PC-9 (cell line): ENCODE measurements at regions of chr13 and their contacts with region 1.

Region 1: DNA sequence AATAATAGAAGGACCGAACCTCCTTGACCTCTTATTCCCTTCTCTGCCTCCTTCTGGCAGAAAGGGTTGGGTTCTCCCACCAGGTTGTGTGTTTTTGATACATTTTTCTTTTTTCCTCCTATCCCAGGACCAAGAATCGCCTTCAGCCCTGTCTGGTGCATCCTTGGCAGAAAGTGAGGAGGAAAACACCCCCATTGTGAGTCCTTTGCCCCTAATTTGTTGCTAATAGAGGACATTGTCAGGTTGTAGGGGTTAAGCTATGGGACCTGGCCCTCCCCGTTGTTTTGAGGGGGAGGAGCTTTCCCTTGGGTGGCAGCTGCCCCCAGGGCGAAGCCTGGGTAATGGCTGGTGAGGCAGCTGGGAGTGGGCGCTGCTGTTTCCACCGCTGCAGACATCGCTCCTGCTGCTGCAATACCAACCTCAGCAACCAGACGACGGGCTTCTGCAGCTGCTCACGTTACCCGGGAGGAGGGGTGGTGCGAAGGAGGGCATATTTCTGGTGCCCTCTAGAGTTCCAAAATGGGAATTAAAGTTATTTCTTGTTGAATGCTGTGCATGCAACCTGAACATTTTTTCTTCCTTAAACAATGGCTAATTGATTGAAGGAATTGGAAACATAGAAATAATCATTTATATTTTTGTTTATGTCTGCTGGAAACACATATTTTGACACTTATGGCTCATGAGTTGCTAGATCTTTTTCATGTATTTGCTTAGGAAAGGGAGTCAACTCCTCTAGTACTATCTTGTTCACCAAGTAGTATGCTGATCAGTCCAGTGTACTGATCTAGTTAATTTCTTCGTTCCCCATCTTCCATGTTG is 1.5 kb downstream of the ZMYM2 start:
- DNase-seq: peak; percentile 72 to 84
- H3K4me3 ChIP-seq: peak overlapping the region; percentile 76
- H3K27ac ChIP-seq: peak overlapping the region; percentile 37
- H3K4me1 ChIP-seq: peaks cover 16% of the 10 kb centered on the region
- H3K27me3 ChIP-seq: no peaks in the 10 kb centered on the region
- CTCF ChIP-seq: peak; percentile 77

Region 2: GRCh38 chr13:19601749-19602725 is 358.0 kb before region 1 on chr13:
- CTCF ChIA-PET with region 1: no interaction called
- POLR2A ChIA-PET with region 1: no interaction called
- intact Hi-C with region 1: loop called (anchors 10 kb)
- DNase-seq: peak in 1 of 2 experiments; percentile 46
- H3K4me3 ChIP-seq: peak overlapping the region; percentile 87
- H3K27ac ChIP-seq: no peak overlapping the region
- H3K4me1 ChIP-seq: peaks cover 26% of the 10 kb centered on the region
- H3K27me3 ChIP-seq: no peaks in the 10 kb centered on the region
- CTCF ChIP-seq: 0 out of 2 replicates have a peak, but pooled peaks have one; percentile 33

Region 3: DNA sequence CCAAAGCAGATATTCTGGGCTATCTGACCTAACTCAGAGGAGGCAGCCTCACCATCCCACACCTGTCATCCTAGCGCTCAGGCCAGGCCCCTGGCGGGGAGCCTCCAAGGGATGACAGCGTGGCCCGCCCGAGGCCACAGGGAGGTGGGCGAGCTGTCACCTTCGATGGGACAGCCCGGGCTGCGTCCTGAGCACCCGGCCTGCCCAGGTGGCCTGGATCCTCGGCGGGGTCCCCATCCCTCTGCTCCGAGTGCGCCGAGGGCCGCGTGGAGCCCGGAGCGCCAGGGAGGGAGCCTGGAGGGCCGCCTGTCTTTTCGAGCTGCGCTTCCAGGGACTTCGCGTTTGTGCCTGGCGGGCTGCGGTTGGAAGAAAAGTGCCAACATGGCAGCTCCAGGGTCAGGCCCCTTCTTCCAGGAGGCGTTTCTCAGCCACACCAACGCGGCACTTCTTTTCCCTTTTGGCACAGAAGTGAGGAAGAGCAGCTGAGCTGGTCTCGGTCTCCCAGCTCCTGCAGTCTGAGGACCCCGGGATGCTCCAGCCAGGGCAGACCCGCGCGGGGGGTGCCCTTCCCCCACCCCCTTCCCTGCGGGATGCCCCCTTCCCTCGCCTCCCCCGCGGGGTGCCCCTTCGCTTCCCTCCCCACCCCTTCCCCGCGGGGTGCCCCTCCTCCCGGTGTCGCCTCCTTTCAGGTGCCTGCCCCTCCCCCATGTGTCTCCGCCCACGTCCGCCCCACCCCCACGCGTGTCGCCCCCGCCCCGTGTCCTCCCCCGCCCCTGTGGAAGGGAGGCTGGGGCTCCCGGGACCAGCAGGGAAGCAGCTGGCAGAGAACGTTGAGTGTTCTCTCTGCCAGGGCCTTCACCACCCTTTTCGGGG is 158.5 kb after region 1 on chr13:
- CTCF ChIA-PET with region 1: no interaction called
- POLR2A ChIA-PET with region 1: interaction called, 10 read pairs
- intact Hi-C with region 1: no loop called
- DNase-seq: peak in 1 of 2 experiments; percentile 52
- H3K4me3 ChIP-seq: peak overlapping the region; percentile 60
- H3K27ac ChIP-seq: no peak overlapping the region
- H3K4me1 ChIP-seq: peaks cover 20% of the 10 kb centered on the region
- H3K27me3 ChIP-seq: no peaks in the 10 kb centered on the region
- CTCF ChIP-seq: no peak

Region 4: DNA sequence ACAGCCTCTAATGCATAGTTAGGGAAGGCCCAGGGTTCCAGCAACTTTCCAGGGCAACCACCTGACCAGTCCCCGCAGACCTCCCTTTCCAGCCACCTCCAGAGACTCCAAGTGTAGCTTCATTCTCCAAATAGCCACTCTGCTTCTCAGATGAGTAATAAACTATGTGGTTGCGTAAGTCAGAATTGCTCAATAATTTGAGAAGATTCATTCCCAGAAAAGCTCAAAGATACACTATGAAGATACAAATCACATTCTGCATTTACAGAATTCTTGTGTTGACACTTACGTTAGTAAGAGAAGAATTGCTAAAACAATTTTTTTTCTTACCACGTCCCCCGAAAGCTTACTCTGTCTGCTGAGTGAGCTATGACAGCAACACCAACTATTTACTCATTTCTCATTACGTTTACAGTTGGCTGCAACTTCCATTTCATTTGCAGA is 1109.5 kb after region 1 on chr13:
- CTCF ChIA-PET with region 1: no interaction called
- POLR2A ChIA-PET with region 1: interaction called, 11 read pairs
- intact Hi-C with region 1: no loop called
- DNase-seq: peak in 1 of 2 experiments; percentile 95
- H3K4me3 ChIP-seq: peak overlapping the region; percentile 11; the same call in 1 of the 2 replicates
- H3K27ac ChIP-seq: peak overlapping the region; percentile 43
- H3K4me1 ChIP-seq: peaks cover 33% of the 10 kb centered on the region
- H3K27me3 ChIP-seq: no peaks in the 10 kb centered on the region
- CTCF ChIP-seq: no peak